Transverse colon (tissue), 4 donors: ENCODE measurements at regions of chr4 and their contacts with region 1.

Region 1: GRCh38 chr4:123649645-123650391 is 253.2 kb downstream of the SPRY1 start:
- DNase-seq: peak; percentile 38
- H3K4me3 ChIP-seq: peak overlapping the region in 1 of 4 donors; percentile 4
- H3K27ac ChIP-seq: peak overlapping the region; percentile 74 to 81 (median 78)
- H3K4me1 ChIP-seq: peaks cover 17 to 42% (median 26%) of the 10 kb centered on the region in 4 donors
- H3K27me3 ChIP-seq: no peaks in the 10 kb centered on the region
- CTCF ChIP-seq: no peak
- EP300 ChIP-seq: peak; percentile 11
- POLR2A ChIP-seq: no peak

Region 2: GRCh38 chr4:123102897-123103471 is 546.8 kb before region 1 on chr4:
- in situ Hi-C with region 1: loop called in 3 of 4 experiments (anchors 25 kb)
- intact Hi-C with region 1: no loop called
- DNase-seq: no peak
- H3K4me3 ChIP-seq: no peak overlapping the region
- H3K27ac ChIP-seq: no peak overlapping the region
- H3K4me1 ChIP-seq: peaks cover 0 to 7% (median 2%) of the 10 kb centered on the region in 4 donors
- H3K27me3 ChIP-seq: no peaks in the 10 kb centered on the region
- CTCF ChIP-seq: peak; percentile 67 to 74 (median 74)
- EP300 ChIP-seq: no peak
- POLR2A ChIP-seq: no peak

Region 3: DNA sequence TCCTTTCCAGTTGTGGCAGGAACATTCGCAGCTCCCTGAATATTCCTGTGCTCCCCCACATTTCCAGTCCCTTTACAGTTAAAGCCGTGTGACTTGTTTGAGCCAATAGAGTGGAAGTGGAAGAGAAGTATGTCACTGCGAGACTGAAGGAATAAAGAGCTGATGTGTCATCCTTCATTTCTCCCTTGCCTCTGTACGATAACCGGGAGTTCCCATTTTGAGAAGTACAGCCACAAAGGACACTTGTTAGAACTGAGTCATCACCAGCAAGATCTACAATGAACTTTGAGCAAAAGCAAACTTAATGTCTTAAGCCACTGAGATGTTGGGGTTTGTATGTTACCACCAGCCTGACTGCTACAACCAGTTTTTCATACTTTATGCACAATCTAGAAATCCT is 160.9 kb before region 1 on chr4:
- in situ Hi-C with region 1: no loop called
- intact Hi-C with region 1: no loop called
- DNase-seq: no peak
- H3K4me3 ChIP-seq: no peak overlapping the region
- H3K27ac ChIP-seq: no peak overlapping the region
- H3K4me1 ChIP-seq: no peaks in the 10 kb centered on the region
- H3K27me3 ChIP-seq: no peaks in the 10 kb centered on the region
- CTCF ChIP-seq: no peak
- EP300 ChIP-seq: no peak
- POLR2A ChIP-seq: no peak

Region 4: GRCh38 chr4:123564758-123565346 is 85.0 kb before region 1 on chr4:
- in situ Hi-C with region 1: loop called in 1 of 4 experiments (anchors 25 kb)
- intact Hi-C with region 1: no loop called
- DNase-seq: peak; percentile 66
- H3K4me3 ChIP-seq: no peak overlapping the region
- H3K27ac ChIP-seq: no peak overlapping the region
- H3K4me1 ChIP-seq: peaks cover 0 to 3% (median 1%) of the 10 kb centered on the region in 4 donors
- H3K27me3 ChIP-seq: no peaks in the 10 kb centered on the region
- CTCF ChIP-seq: peak; percentile 67 to 92 (median 77)
- EP300 ChIP-seq: no peak
- POLR2A ChIP-seq: no peak

Region 5: DNA sequence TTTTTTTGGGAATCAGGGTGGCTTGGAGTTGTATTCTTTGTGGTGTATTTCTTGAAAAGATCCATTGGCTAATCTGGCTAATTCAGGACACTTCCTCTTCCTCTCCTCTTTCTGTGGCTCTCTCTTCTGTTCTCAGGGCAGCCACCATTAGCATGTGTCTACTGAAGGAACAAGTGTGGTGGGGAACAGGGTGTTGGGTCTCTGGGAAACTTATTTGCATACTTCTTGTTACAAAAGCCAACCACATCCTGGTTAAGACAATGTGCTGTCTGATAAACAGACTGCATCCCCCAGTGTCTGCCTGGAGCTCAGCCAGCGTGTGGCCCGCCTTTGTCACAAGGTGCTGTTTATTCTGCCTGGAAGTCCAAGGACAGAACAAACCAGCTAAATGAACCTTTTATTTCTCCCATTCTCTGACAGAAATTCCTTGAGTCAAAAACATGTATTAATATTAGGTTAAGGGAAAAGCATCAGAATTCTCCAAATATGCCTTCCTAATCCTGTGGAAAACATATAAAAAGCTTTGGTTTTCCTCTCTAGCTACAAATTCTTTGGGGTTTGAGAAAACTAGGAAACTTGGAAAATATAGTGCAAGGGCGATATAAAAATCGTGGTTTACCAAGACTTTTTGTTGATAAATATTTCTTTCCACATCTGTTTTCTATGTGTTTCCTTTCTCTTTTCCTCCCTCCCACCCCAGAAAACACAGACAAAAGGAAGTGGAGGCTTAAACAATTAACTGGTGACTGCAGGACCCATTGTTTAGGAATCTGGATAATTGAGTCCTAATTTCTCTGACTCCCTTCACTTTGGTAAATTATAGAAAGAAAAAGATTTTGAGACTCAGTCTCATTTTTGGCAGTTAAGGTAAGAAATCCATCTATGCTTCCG is 49.7 kb before region 1 on chr4:
- in situ Hi-C with region 1: no loop called
- intact Hi-C with region 1: loop called (anchors 2 kb)
- DNase-seq: peak; percentile 82
- H3K4me3 ChIP-seq: no peak overlapping the region
- H3K27ac ChIP-seq: peak overlapping the region; percentile 65 to 79 (median 74)
- H3K4me1 ChIP-seq: peaks cover 18 to 58% (median 42%) of the 10 kb centered on the region in 4 donors
- H3K27me3 ChIP-seq: no peaks in the 10 kb centered on the region
- CTCF ChIP-seq: no peak
- EP300 ChIP-seq: no peak
- POLR2A ChIP-seq: no peak

Region 6: GRCh38 chr4:124167602-124168001 is 517.8 kb after region 1 on chr4:
- in situ Hi-C with region 1: no loop called
- intact Hi-C with region 1: no loop called
- DNase-seq: no peak
- H3K4me3 ChIP-seq: no peak overlapping the region
- H3K27ac ChIP-seq: no peak overlapping the region
- H3K4me1 ChIP-seq: no peaks in the 10 kb centered on the region
- H3K27me3 ChIP-seq: no peaks in the 10 kb centered on the region
- CTCF ChIP-seq: no peak
- EP300 ChIP-seq: no peak
- POLR2A ChIP-seq: no peak